Right lobe of liver (tissue), 6 donors: ENCODE measurements at regions of chr11 and their contacts with region 1.

Region 1: GRCh38 chr11:8011981-8012444 is 24.9 kb downstream of the EIF3F start:
- DNase-seq: no peak
- ATAC-seq: no peak
- H3K4me3 ChIP-seq: no peak overlapping the region
- H3K27ac ChIP-seq: no peak overlapping the region
- H3K4me1 ChIP-seq: no peaks in the 10 kb centered on the region
- H3K27me3 ChIP-seq: no peaks in the 10 kb centered on the region
- CTCF ChIP-seq: no peak
- POLR2A ChIP-seq: no peak

Region 2: GRCh38 chr11:8087185-8087584 is 75.2 kb after region 1 on chr11:
- intact Hi-C with region 1: loop called (anchors 5 kb)
- DNase-seq: no peak
- ATAC-seq: peak; percentile 27 to 57 (median 46)
- H3K4me3 ChIP-seq: no peak overlapping the region
- H3K27ac ChIP-seq: no peak overlapping the region
- H3K4me1 ChIP-seq: no peaks in the 10 kb centered on the region
- H3K27me3 ChIP-seq: no peaks in the 10 kb centered on the region
- CTCF ChIP-seq: peak in 3 of 4 donors; percentile 15 to 31 (median 23)
- POLR2A ChIP-seq: no peak

Region 3: GRCh38 chr11:8092587-8093424 is 80.8 kb after region 1 on chr11:
- intact Hi-C with region 1: loop called (anchors 5 kb)
- DNase-seq: peak in 2 of 3 donors; percentile 43 to 50
- ATAC-seq: peak; percentile 73 to 87 (median 78)
- H3K4me3 ChIP-seq: no peak overlapping the region
- H3K27ac ChIP-seq: no peak overlapping the region
- H3K4me1 ChIP-seq: no peaks in the 10 kb centered on the region
- H3K27me3 ChIP-seq: no peaks in the 10 kb centered on the region
- CTCF ChIP-seq: peak; percentile 40 to 64 (median 52)
- POLR2A ChIP-seq: no peak

Region 4: GRCh38 chr11:8138526-8138925 is 126.5 kb after region 1 on chr11:
- intact Hi-C with region 1: no loop called
- DNase-seq: no peak
- ATAC-seq: no peak
- H3K4me3 ChIP-seq: no peak overlapping the region
- H3K27ac ChIP-seq: no peak overlapping the region
- H3K4me1 ChIP-seq: no peaks in the 10 kb centered on the region
- H3K27me3 ChIP-seq: no peaks in the 10 kb centered on the region
- CTCF ChIP-seq: no peak
- POLR2A ChIP-seq: no peak